Breast epithelium (tissue), 4 donors: ENCODE measurements at regions of chr13 and their contacts with region 1.

Region 1: DNA sequence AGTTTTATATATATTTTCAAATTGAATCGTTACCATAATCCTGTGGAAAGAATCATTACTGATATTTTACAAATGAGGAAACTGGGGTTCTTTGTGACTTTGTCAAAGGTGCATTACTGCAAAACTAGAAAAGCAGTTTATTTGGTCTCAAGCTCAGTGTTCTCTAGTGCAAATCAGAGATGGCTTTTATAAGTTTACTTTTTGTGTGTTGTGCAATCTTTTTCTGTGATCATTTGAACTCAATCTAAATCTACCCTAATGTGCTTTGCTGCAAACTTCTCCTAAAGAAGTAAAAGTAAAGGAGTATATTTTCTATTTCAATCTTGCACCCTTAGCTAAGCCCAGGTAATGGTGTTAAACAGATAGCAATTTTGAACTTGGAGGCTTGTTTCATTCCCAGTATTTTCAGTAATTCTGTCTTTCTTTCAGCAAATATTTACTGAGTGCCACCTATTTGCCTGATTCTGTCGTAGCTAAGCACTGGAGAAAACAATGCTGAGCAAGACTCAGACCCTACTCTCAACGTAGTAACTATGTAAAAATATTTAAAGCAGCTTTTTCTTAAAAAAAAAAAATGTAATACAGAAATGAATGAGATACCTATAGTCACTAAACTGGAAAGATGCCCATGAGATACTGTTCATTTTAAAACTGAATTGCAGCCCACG is 124.0 kb downstream of the TDRD3 start:
- DNase-seq: no peak
- H3K4me3 ChIP-seq: no peak overlapping the region
- H3K27ac ChIP-seq: no peak overlapping the region
- H3K4me1 ChIP-seq: no peaks in the 10 kb centered on the region
- H3K27me3 ChIP-seq: no peaks in the 10 kb centered on the region
- CTCF ChIP-seq: no peak
- POLR2A ChIP-seq: no peak

Region 2: GRCh38 chr13:59527500-59527899 is 993.5 kb before region 1 on chr13:
- intact Hi-C with region 1: loop called (anchors 5 kb)
- DNase-seq: no peak
- H3K4me3 ChIP-seq: no peak overlapping the region
- H3K27ac ChIP-seq: no peak overlapping the region
- H3K4me1 ChIP-seq: no peaks in the 10 kb centered on the region
- H3K27me3 ChIP-seq: no peaks in the 10 kb centered on the region
- CTCF ChIP-seq: no peak
- POLR2A ChIP-seq: no peak